CD8-positive, alpha-beta T cell (primary cell): ENCODE measurements at regions of chr1 and their contacts with region 1.

Region 1: GRCh38 chr1:223189903-223190724 is 47.1 kb upstream of the TLR5 start:
- DNase-seq: peak in 7 of 9 experiments; percentile 38 to 80 (median 53)
- ATAC-seq: peak; percentile 84
- H3K4me3 ChIP-seq: peak overlapping the region in 1 of 2 experiments; percentile 12
- H3K4me3 Mint-ChIP-seq: peak overlapping the region; percentile 3
- H3K27ac ChIP-seq: peak overlapping the region in 1 of 2 experiments; percentile 1
- H3K27ac Mint-ChIP-seq: peak overlapping the region; percentile 60
- H3K4me1 ChIP-seq: peaks cover 29% of the 10 kb centered on the region
- H3K4me1 Mint-ChIP-seq: peaks cover 31% of the 10 kb centered on the region
- H3K27me3 ChIP-seq: no peaks in the 10 kb centered on the region
- H3K27me3 Mint-ChIP-seq: no peaks in the 10 kb centered on the region
- CTCF ChIP-seq: no peak

Region 2: DNA sequence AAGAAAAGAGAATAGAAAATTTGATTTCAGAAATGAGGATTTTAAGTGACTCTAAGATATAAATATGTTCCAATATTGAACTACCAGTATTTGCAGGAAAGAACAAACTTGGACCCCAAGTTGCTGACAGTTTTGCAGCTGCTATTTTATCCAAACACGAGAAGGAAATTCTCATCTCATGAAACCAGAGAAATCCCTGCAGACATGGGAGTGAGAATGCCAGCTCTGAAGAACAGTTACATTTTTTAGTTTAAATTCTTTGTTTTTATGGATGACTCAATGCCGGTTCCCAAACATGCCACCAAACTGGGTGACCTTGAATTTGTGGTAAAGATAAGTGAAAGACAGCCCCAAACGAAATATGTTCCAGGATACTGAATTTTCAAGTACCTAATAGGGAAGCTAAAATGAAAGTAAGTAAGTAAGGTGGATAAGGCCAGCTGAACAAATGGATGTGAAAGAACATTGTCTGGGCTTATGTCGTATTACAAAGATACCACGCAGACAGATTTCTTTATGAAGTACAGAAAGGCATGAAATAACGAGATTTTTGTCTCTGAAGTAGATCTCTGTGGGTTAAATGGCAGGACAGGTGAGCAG is 67.0 kb before region 1 on chr1:
- CTCF ChIA-PET with region 1: no interaction called
- POLR2A ChIA-PET with region 1: no interaction called
- intact Hi-C with region 1: no loop called
- DNase-seq: no peak
- ATAC-seq: no peak
- H3K4me3 ChIP-seq: peak overlapping the region; percentile 13 to 29
- H3K4me3 Mint-ChIP-seq: peak overlapping the region; percentile 63
- H3K27ac ChIP-seq: no peak overlapping the region
- H3K27ac Mint-ChIP-seq: no peak overlapping the region
- H3K4me1 ChIP-seq: no peaks in the 10 kb centered on the region
- H3K4me1 Mint-ChIP-seq: peaks cover 6% of the 10 kb centered on the region
- H3K27me3 ChIP-seq: no peaks in the 10 kb centered on the region
- H3K27me3 Mint-ChIP-seq: no peaks in the 10 kb centered on the region
- CTCF ChIP-seq: no peak

Region 3: GRCh38 chr1:223142795-223143536 is 47.1 kb before region 1 on chr1 and contains the start of gene TLR5:
- CTCF ChIA-PET with region 1: no interaction called
- POLR2A ChIA-PET with region 1: no interaction called
- intact Hi-C with region 1: loop called in 1 of 2 experiments (anchors 2 kb)
- DNase-seq: peak; percentile 75 to 94 (median 90)
- ATAC-seq: peak; percentile 91
- H3K4me3 ChIP-seq: peak within 1 kb of the TSS; percentile 54
- H3K4me3 Mint-ChIP-seq: peak within 1 kb of the TSS; percentile 73
- H3K27ac ChIP-seq: peak within 1 kb of the TSS; percentile 21 to 25
- H3K27ac Mint-ChIP-seq: peak within 1 kb of the TSS; percentile 52
- H3K4me1 ChIP-seq: peaks cover 16% of the 10 kb centered on the region
- H3K4me1 Mint-ChIP-seq: peaks cover 21% of the 10 kb centered on the region
- H3K27me3 ChIP-seq: no peaks in the 10 kb centered on the region
- H3K27me3 Mint-ChIP-seq: no peaks in the 10 kb centered on the region
- CTCF ChIP-seq: peak; percentile 28
- total RNA-seq, gene TLR5: 1.1 to 1.2 TPM

Region 4: DNA sequence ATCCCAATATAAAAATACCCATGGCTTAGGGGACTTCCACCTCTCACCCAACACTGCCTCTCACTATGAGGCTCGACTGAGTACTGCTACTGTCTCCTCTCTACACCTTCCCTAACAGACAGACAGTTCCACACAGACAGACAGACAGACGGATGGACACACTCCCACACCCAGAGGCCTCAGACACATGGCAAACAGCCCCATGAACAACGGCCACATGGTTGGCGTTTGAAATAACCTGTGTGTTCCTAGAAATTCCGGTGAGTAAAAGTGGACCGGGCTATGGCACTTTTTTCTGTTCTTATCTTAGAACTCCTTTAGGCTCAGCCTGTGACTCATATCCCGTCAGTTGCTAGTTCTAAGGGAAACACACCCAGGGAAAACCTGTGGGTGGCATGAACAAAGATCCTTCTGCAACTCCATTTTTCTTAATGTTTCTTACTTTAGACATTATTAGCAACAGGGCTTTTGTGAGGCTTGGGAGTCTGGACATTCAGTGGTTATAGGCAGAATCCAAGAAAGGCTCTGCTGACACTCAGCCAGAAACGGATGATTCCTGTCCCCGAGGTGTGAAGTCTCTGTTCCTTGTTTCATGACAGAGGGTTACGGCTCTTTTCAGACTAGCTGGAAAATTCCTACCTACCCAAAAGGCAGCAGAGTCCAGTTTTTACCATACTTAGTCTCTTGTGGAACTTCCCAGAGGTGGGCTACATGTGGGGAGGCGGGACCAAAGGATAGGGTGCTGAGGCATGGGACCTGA is 43.5 kb after region 1 on chr1:
- CTCF ChIA-PET with region 1: no interaction called
- POLR2A ChIA-PET with region 1: no interaction called
- intact Hi-C with region 1: loop called in 1 of 2 experiments (anchors 5 kb)
- DNase-seq: peak in 2 of 9 experiments; percentile 39 to 41
- ATAC-seq: no peak
- H3K4me3 ChIP-seq: no peak overlapping the region
- H3K4me3 Mint-ChIP-seq: no peak overlapping the region
- H3K27ac ChIP-seq: no peak overlapping the region
- H3K27ac Mint-ChIP-seq: no peak overlapping the region
- H3K4me1 ChIP-seq: peaks cover 62% of the 10 kb centered on the region
- H3K4me1 Mint-ChIP-seq: peaks cover 61% of the 10 kb centered on the region
- H3K27me3 ChIP-seq: no peaks in the 10 kb centered on the region
- H3K27me3 Mint-ChIP-seq: no peaks in the 10 kb centered on the region
- CTCF ChIP-seq: no peak

Region 5: GRCh38 chr1:223244366-223245103 is 54.4 kb after region 1 on chr1:
- CTCF ChIA-PET with region 1: no interaction called
- POLR2A ChIA-PET with region 1: no interaction called
- intact Hi-C with region 1: loop called in 1 of 2 experiments (anchors 5 kb)
- DNase-seq: peak in 6 of 9 experiments; percentile 30 to 69 (median 38)
- ATAC-seq: peak; percentile 48
- H3K4me3 ChIP-seq: no peak overlapping the region
- H3K4me3 Mint-ChIP-seq: no peak overlapping the region
- H3K27ac ChIP-seq: no peak overlapping the region
- H3K27ac Mint-ChIP-seq: no peak overlapping the region
- H3K4me1 ChIP-seq: peaks cover 32% of the 10 kb centered on the region
- H3K4me1 Mint-ChIP-seq: peaks cover 41% of the 10 kb centered on the region
- H3K27me3 ChIP-seq: no peaks in the 10 kb centered on the region
- H3K27me3 Mint-ChIP-seq: no peaks in the 10 kb centered on the region
- CTCF ChIP-seq: no peak